ENCODE measurements at regions of chr16 and their contacts with region 1.

Region 1: DNA sequence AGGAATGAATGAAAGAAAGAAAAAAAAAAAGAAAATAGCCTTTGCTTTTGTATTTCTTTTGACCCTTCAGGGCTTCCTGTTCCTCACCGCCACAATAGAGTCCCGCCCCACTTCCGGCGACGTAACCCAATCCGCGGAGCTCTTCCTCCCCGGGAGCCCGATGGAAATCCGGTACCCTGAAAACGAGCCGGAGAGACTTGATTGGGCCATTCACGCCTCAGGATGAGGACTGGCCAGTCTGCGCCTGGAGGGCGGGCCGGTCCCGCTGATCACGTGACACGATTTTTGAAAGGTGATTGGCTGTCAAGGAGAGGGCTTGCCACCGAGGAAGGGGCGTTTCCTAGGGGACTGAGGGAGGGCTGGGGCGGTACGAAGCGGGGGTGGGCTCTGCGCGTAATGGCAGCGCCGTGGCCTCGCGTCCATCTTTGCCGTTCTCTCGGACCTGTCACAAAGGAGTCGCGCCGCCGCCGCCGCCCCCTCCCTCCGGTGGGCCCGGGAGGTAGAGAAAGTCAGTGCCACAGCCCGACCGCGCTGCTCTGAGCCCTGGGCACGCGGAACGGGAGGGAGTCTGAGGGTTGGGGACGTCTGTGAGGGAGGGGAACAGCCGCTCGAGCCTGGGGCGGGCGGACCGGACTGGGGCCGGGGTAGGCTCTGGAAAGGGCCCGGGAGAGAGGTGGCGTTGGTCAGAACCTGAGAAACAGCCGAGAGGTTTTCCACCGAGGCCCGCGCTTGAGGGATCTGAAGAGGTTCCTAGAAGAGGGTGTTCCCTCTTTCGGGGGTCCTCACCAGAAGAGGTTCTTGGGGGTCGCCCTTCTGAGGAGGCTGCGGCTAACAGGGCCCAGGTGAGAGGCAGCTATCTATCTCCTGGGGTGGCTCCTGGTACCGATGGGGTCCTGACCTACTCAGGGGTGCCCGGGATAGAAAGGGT is at the starts of genes PSME3IP1 and RSPRY1:
- DNase-seq: peak; percentile 86 to 100 (median 99)
- ATAC-seq: peak; percentile 92
- H3K4me3 ChIP-seq: peak within 1 kb of the TSS; percentile 95
- H3K4me3 Mint-ChIP-seq: peak within 1 kb of the TSS; percentile 93 to 100 (median 98)
- H3K27ac ChIP-seq: peak within 1 kb of the TSS; percentile 94
- H3K27ac Mint-ChIP-seq: peak within 1 kb of the TSS; percentile 93 to 99 (median 95)
- H3K4me1 ChIP-seq: peaks cover 20 to 24% of the 10 kb centered on the region in 2 donors
- H3K4me1 Mint-ChIP-seq: peaks cover 41 to 77% (median 59%) of the 10 kb centered on the region in 7 donors
- H3K27me3 ChIP-seq: no peaks in the 10 kb centered on the region
- H3K27me3 Mint-ChIP-seq: peaks cover 0 to 3% (median 0%) of the 10 kb centered on the region in 5 donors
- total RNA-seq, gene PSME3IP1: 109 to 159 (median 140) TPM
- total RNA-seq, gene RSPRY1: 24.1 to 40.5 (median 33.6) TPM

Region 2: GRCh38 chr16:56519459-56520250 is 666.6 kb before region 1 on chr16 and contains the start of gene BBS2:
- CTCF ChIA-PET with region 1: no interaction called
- POLR2A ChIA-PET with region 1: no interaction called
- intact Hi-C with region 1: loop called in 1 of 2 experiments (anchors 5 kb)
- DNase-seq: peak; percentile 84 to 93 (median 92)
- ATAC-seq: peak; percentile 89
- H3K4me3 ChIP-seq: peak within 1 kb of the TSS; percentile 99
- H3K4me3 Mint-ChIP-seq: peak within 1 kb of the TSS; percentile 82 to 91 (median 86)
- H3K27ac ChIP-seq: peak within 1 kb of the TSS; percentile 92
- H3K27ac Mint-ChIP-seq: peak within 1 kb of the TSS; percentile 60 to 95 (median 90)
- H3K4me1 ChIP-seq: peaks cover 8 to 26% of the 10 kb centered on the region in 2 donors
- H3K4me1 Mint-ChIP-seq: peaks cover 11 to 62% (median 52%) of the 10 kb centered on the region in 7 donors
- H3K27me3 ChIP-seq: no peaks in the 10 kb centered on the region
- H3K27me3 Mint-ChIP-seq: no peaks in the 10 kb centered on the region
- total RNA-seq, gene BBS2: 14.7 to 130 (median 84.0) TPM

Region 3: GRCh38 chr16:56860226-56861020 is 325.8 kb before region 1 on chr16:
- CTCF ChIA-PET with region 1: no interaction called
- POLR2A ChIA-PET with region 1: no interaction called
- intact Hi-C with region 1: no loop called
- DNase-seq: peak in 8 of 9 donors; percentile 33 to 60 (median 44)
- ATAC-seq: peak; percentile 68
- H3K4me3 ChIP-seq: peak overlapping the region; percentile 25
- H3K4me3 Mint-ChIP-seq: peak overlapping the region; percentile 19 to 82 (median 74)
- H3K27ac ChIP-seq: peak overlapping the region; percentile 57
- H3K27ac Mint-ChIP-seq: peak overlapping the region; percentile 68 to 97 (median 91)
- H3K4me1 ChIP-seq: peaks cover 23 to 48% of the 10 kb centered on the region in 2 donors
- H3K4me1 Mint-ChIP-seq: peaks cover 0 to 54% (median 39%) of the 10 kb centered on the region in 7 donors
- H3K27me3 ChIP-seq: no peaks in the 10 kb centered on the region
- H3K27me3 Mint-ChIP-seq: no peaks in the 10 kb centered on the region

Region 4: GRCh38 chr16:56988948-56989945 is 197.0 kb before region 1 on chr16 and contains the start of gene NLRC5:
- CTCF ChIA-PET with region 1: no interaction called
- POLR2A ChIA-PET with region 1: interaction called, 10 read pairs
- intact Hi-C with region 1: loop called in 1 of 2 experiments (anchors 1 kb)
- DNase-seq: peak; percentile 72 to 93 (median 88)
- ATAC-seq: peak; percentile 95
- H3K4me3 ChIP-seq: peak within 1 kb of the TSS; percentile 73
- H3K4me3 Mint-ChIP-seq: peak within 1 kb of the TSS; percentile 93 to 100 (median 98)
- H3K27ac ChIP-seq: peak within 1 kb of the TSS; percentile 98
- H3K27ac Mint-ChIP-seq: peak within 1 kb of the TSS; percentile 85 to 99 (median 97)
- H3K4me1 ChIP-seq: peaks cover 24 to 51% of the 10 kb centered on the region in 2 donors
- H3K4me1 Mint-ChIP-seq: peaks cover 65 to 87% (median 73%) of the 10 kb centered on the region in 7 donors
- H3K27me3 ChIP-seq: no peaks in the 10 kb centered on the region
- H3K27me3 Mint-ChIP-seq: no peaks in the 10 kb centered on the region
- total RNA-seq, gene NLRC5: 380 to 615 (median 394) TPM

Region 5: DNA sequence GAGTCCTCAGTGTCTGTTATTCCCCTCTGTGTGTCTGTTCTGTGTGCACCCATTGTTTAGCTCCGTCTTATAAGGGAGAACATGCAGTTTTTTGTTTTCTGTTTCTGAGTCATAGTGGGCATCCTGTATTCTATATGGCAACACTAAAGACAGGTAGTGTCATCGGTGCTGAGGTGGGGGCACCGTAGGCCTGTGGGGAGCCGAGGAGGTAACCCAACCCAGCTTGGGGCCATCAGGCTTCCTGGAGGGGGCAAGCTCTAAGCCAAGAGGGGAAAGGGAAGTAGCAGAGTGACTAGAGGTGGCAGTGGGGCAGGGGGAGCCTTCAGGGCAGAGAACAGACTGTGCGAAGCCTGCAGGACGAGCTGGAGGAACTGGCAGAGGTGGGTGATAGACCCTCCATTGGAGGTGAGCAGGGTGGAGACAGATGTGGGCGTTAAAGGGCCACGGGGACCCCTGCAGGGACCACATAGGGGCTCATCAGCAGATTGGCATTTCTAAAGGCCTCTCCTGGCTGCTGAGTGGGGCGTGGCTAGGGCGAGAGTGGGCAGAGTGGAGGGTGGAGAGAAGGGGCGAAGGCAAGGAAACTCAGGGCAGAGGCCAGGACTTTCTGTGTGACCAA is 57.3 kb before region 1 on chr16:
- CTCF ChIA-PET with region 1: no interaction called
- POLR2A ChIA-PET with region 1: interaction called, 3 read pairs
- intact Hi-C with region 1: loop called in 1 of 2 experiments (anchors 2 kb)
- DNase-seq: peak in 6 of 9 donors; percentile 26 to 35 (median 32)
- ATAC-seq: peak; percentile 66
- H3K4me3 ChIP-seq: peak overlapping the region; percentile 2
- H3K4me3 Mint-ChIP-seq: peak overlapping the region; percentile 27 to 84 (median 59)
- H3K27ac ChIP-seq: peak overlapping the region; percentile 55
- H3K27ac Mint-ChIP-seq: peak overlapping the region; percentile 83 to 94 (median 91)
- H3K4me1 ChIP-seq: peaks cover 76 to 82% of the 10 kb centered on the region in 2 donors
- H3K4me1 Mint-ChIP-seq: peaks cover 50 to 98% (median 85%) of the 10 kb centered on the region in 7 donors
- H3K27me3 ChIP-seq: no peaks in the 10 kb centered on the region
- H3K27me3 Mint-ChIP-seq: no peaks in the 10 kb centered on the region

Region 6: GRCh38 chr16:57165938-57166337 is 20.3 kb before region 1 on chr16:
- CTCF ChIA-PET with region 1: no interaction called
- POLR2A ChIA-PET with region 1: no interaction called
- intact Hi-C with region 1: no loop called
- DNase-seq: no peak
- ATAC-seq: no peak
- H3K4me3 ChIP-seq: no peak overlapping the region
- H3K4me3 Mint-ChIP-seq: no peak overlapping the region
- H3K27ac ChIP-seq: no peak overlapping the region
- H3K27ac Mint-ChIP-seq: no peak overlapping the region
- H3K4me1 ChIP-seq: peaks cover 0 to 4% of the 10 kb centered on the region in 2 donors
- H3K4me1 Mint-ChIP-seq: peaks cover 5 to 29% (median 15%) of the 10 kb centered on the region in 7 donors
- H3K27me3 ChIP-seq: no peaks in the 10 kb centered on the region
- H3K27me3 Mint-ChIP-seq: no peaks in the 10 kb centered on the region

Region 7: DNA sequence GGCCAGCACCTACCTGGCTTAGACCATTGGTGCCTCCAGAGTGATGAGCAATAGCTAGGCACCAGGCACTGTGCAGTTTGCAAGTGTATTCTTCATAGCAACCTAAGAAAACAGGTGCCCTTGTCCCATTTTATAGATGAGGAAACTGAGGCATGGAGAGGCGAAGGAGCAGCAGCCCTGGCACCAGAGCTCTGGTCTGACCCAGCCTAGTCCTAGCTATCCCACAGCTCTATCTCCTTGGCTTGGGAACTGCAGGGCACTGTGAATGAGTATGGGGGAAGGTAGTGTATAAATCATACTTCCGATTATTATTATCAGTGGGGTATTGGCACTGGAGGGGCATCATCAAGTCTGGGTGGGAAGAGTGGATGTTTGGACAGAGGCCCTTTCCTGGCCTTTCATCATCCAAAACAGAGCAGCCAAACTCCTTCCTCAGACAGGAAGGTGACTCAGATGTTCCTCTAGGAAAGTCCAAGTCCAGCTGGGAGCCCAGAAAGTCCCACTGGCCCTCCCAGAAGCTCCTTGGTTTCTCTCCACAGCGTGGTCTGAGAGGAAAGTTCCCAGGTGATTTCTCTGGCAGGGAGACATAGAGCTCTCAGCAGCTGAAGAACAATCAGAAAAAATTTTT is 130.3 kb after region 1 on chr16:
- CTCF ChIA-PET with region 1: no interaction called
- POLR2A ChIA-PET with region 1: no interaction called
- intact Hi-C with region 1: no loop called
- DNase-seq: peak in 1 of 9 donors; percentile 3
- ATAC-seq: no peak
- H3K4me3 ChIP-seq: no peak overlapping the region
- H3K4me3 Mint-ChIP-seq: no peak overlapping the region
- H3K27ac ChIP-seq: no peak overlapping the region
- H3K27ac Mint-ChIP-seq: peak overlapping the region in 1 of 9 donors; percentile 56
- H3K4me1 ChIP-seq: peaks cover 0 to 8% of the 10 kb centered on the region in 2 donors
- H3K4me1 Mint-ChIP-seq: peaks cover 15 to 31% (median 18%) of the 10 kb centered on the region in 7 donors
- H3K27me3 ChIP-seq: no peaks in the 10 kb centered on the region
- H3K27me3 Mint-ChIP-seq: peaks cover 0 to 5% (median 0%) of the 10 kb centered on the region in 5 donors

Region 8: GRCh38 chr16:57416122-57416509 is 229.9 kb after region 1 on chr16:
- CTCF ChIA-PET with region 1: no interaction called
- POLR2A ChIA-PET with region 1: no interaction called
- intact Hi-C with region 1: loop called in 1 of 2 experiments (anchors 2 kb)
- DNase-seq: no peak
- ATAC-seq: no peak
- H3K4me3 ChIP-seq: no peak overlapping the region
- H3K4me3 Mint-ChIP-seq: no peak overlapping the region
- H3K27ac ChIP-seq: no peak overlapping the region
- H3K27ac Mint-ChIP-seq: no peak overlapping the region
- H3K4me1 ChIP-seq: peaks cover 11 to 18% of the 10 kb centered on the region in 2 donors
- H3K4me1 Mint-ChIP-seq: peaks cover 17 to 29% (median 23%) of the 10 kb centered on the region in 7 donors
- H3K27me3 ChIP-seq: no peaks in the 10 kb centered on the region
- H3K27me3 Mint-ChIP-seq: no peaks in the 10 kb centered on the region

Region 9: DNA sequence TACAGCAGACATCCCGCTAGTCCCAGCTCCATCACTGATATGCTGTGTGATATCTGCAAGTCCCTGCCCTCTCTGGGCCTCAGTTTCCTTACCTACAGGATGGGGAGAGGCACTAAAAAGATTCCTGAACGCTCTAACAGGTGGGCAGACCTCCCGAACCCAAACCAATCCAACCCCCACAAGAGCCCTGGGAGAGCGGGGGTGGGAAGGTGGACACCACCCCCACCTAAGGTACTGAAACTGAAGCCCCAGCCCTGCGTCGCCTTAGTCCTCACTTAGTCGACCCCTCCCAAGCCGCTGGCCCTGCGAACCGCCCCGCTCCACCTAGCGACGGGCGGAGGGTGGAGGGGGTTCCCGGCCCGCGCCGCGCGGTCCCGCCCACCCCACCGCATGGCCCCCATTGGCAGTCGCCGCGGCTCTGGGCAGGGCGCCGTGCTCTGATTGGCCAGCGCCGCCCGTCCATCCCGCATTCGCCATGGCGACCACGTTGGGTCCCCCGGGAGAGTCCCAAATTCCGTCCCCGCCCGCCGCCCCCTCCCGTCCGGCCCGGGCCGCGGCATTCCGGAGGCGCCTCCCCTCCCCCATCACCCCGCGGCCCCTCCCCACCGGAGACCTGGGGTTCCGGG is 349.6 kb after region 1 on chr16:
- CTCF ChIA-PET with region 1: interaction called, 3 read pairs
- POLR2A ChIA-PET with region 1: no interaction called
- intact Hi-C with region 1: loop called in 1 of 2 experiments (anchors 5 kb)
- DNase-seq: peak; percentile 77 to 94 (median 87)
- ATAC-seq: peak; percentile 95
- H3K4me3 ChIP-seq: peak overlapping the region; percentile 44
- H3K4me3 Mint-ChIP-seq: peak overlapping the region; percentile 77 to 89 (median 82)
- H3K27ac ChIP-seq: peak overlapping the region; percentile 93
- H3K27ac Mint-ChIP-seq: peak overlapping the region; percentile 82 to 96 (median 94)
- H3K4me1 ChIP-seq: peaks cover 54 to 60% of the 10 kb centered on the region in 2 donors
- H3K4me1 Mint-ChIP-seq: peaks cover 57 to 79% (median 74%) of the 10 kb centered on the region in 7 donors
- H3K27me3 ChIP-seq: no peaks in the 10 kb centered on the region
- H3K27me3 Mint-ChIP-seq: no peaks in the 10 kb centered on the region

Measured in naive thymus-derived CD4-positive, alpha-beta T cell (primary cell).